ENCODE measurements at regions of chr10 and their contacts with region 1.

Region 1: DNA sequence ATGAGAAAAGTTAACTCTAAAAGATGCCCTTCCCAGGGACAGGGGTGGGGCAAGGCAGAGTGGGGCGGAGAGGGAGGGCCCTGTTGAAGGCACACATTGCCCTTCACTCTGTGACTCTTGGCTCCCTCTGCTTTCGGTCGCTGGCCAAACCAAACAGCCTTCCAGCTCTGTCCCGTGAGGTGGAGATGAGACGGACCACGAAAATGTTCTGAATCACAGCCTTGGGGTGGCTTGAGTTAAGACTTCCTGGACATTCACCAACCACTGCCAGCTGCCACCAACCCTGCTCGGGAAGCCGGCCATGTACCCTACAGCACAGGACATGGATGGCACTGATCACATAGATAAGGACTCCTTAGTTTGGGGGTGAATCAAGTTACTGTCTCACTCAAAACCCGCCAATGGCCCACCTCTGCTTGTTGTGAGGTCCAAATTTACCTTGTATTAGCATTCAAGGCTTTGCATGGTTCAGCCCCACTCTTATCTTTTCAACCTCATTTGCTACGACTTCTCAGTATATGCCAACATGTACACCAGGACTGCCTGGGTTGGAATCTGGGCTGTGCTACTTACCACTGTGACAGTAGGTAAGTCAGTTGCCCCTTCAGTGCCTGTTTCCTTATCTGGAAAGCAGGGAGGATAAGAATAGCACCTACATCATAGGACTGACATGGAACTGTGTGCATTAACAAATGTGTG is 28.1 kb downstream of the ITPRIP start:
- DNase-seq: peak; percentile 80 to 91
- ATAC-seq: peak; percentile 86 to 89 (median 88)
- H3K4me3 ChIP-seq: no peak overlapping the region
- H3K27ac ChIP-seq: peak overlapping the region; percentile 83
- H3K4me1 ChIP-seq: peaks cover 39% of the 10 kb centered on the region
- H3K27me3 ChIP-seq: no peaks in the 10 kb centered on the region
- CTCF ChIP-seq: no peak

Region 2: DNA sequence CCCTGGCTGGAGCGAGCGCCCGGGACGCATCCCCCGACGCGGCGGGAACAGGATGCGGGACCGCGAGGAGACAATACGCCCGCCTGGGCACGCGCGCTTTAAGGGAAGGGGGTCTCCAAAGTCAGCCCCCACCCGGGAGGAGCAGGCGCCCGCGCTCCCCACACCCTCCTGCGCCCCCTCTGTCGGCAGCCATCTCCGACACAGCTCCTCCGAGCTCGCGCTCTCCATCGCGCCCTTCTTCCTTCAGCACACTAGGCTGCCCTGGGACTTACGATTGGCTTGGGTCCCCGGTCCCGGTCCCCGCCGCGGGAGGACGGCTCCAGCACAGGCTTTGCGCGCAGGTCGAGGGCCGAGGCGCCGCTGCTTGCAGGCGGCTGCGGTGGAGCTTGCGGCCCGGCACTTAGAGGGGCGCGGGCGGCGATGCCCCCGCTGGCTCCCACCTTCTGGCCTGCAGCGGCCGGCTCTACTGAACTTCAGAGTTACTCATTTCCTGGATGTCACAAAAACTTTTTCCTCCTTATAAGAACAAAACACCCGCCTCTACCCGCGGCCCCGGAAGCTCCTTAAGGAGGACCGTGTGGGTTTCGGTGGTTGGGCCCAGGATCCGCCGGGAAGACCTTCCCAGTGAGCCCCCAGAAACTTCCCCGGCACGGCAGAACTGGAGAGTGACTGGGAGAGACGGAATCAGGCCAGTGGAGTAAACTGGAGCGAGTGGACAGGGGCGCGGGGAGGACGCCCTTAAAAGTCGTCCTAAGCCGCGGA is 28.0 kb after region 1 on chr10 and contains the start of gene ITPRIP:
- intact Hi-C with region 1: loop called in 1 of 2 experiments (anchors 1 kb)
- DNase-seq: peak; percentile 76 to 84
- ATAC-seq: peak; percentile 70 to 80 (median 75)
- H3K4me3 ChIP-seq: peak within 1 kb of the TSS; percentile 89
- H3K27ac ChIP-seq: peak within 1 kb of the TSS; percentile 97
- H3K4me1 ChIP-seq: peaks cover 51% of the 10 kb centered on the region
- H3K27me3 ChIP-seq: no peaks in the 10 kb centered on the region
- CTCF ChIP-seq: no peak
- total RNA-seq, gene ITPRIP: 7.2 to 25.6 (median 8.6) TPM

Region 3: DNA sequence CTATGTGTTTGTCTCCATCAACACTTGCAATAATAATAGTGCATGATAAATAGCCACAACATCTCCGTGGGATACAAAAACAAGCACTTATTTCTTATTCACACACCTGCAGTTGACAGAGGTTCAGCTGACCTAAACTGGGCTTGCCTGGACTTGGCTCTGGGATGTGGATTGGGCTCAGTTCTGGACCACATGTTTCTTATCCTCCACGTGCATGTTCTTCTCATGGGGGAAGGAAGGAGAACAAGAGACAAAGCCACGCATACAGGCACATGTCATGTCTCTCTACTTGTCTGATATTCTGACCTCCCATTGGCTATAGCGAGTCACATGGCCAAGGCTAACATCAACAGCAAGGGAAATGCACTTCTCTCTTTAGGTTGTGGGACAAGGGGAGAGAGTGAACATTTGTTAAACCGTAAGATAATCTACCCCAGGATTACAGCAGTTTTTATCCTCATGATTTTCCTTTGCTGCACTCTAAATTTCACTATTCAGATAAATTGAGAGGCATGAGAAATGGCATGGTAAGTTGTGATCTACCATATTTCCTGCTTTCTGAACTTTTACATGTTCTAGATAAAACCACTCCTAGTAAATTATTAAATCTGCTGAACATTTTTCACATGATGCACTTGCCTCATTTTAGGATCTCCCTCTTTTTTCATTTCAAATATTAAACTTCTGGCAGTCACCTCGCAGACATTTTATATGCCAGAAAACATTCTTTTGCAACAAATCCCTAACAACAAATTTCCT is 77.2 kb after region 1 on chr10:
- intact Hi-C with region 1: no loop called
- DNase-seq: no peak
- ATAC-seq: no peak
- H3K4me3 ChIP-seq: no peak overlapping the region
- H3K27ac ChIP-seq: no peak overlapping the region
- H3K4me1 ChIP-seq: no peaks in the 10 kb centered on the region
- H3K27me3 ChIP-seq: no peaks in the 10 kb centered on the region
- CTCF ChIP-seq: no peak